ENCODE measurements at regions of chr9 and their contacts with region 1.

Region 1: DNA sequence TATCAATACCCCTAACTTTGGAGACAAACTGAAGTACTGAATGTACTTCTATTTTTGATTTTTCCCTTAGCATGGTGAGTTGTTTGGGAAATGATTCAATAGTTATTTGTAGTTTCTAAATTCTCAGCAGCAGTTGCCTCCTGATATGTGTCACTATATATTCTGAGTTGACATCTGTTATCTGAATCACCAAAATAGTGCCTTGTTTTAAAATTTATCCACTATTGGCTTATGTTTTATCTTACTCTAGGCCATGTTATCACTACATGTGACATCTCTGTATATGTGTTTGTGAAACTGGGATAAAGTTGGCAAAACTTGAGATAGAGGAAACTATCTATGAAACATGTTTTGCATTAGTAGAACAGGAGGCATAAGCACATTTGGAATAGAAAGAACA is 317.6 kb downstream of the TLE4 start:
- DNase-seq: no peak
- ATAC-seq: no peak
- H3K4me3 ChIP-seq: no peak overlapping the region
- H3K4me3 Mint-ChIP-seq: no peak overlapping the region
- H3K27ac ChIP-seq: no peak overlapping the region
- H3K27ac Mint-ChIP-seq: no peak overlapping the region
- H3K4me1 ChIP-seq: peaks cover 13 to 22% of the 10 kb centered on the region in 2 donors
- H3K4me1 Mint-ChIP-seq: peaks cover 21% of the 10 kb centered on the region
- H3K27me3 ChIP-seq: no peaks in the 10 kb centered on the region
- H3K27me3 Mint-ChIP-seq: no peaks in the 10 kb centered on the region
- CTCF ChIP-seq: no peak

Region 2: DNA sequence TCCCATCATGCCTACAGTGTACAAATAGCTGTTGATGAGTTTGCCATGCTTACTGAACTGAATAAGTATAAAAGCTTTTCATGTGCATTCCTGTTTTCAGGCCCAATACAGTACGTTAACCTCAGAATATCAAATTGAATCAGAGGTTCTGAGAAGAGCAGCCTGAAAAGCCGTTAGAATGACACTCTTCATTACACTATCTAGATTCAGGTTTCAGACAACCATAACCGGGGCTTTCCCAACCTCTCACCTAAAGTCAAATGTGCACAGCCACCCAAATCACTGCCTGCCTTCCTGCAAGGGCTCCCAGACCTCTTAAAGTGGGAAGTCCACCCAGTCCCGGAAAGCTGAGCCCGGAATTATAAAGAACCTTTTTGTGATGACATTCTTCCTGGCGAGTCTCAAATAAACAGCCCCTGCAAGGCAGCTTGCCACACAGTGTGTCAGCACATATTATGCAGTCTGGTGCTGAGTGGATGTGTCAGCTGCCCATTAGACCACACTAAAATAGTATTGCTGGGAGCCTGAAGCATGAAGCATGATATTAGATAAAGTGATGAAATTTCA is 71.8 kb before region 1 on chr9:
- CTCF ChIA-PET with region 1: interaction called, 3 read pairs
- POLR2A ChIA-PET with region 1: no interaction called
- intact Hi-C with region 1: loop called (anchors 2 kb)
- DNase-seq: peak; percentile 56
- ATAC-seq: peak; percentile 42
- H3K4me3 ChIP-seq: no peak overlapping the region
- H3K4me3 Mint-ChIP-seq: peak overlapping the region; percentile 20
- H3K27ac ChIP-seq: no peak overlapping the region
- H3K27ac Mint-ChIP-seq: no peak overlapping the region
- H3K4me1 ChIP-seq: peaks cover 39 to 47% of the 10 kb centered on the region in 2 donors
- H3K4me1 Mint-ChIP-seq: peaks cover 46% of the 10 kb centered on the region
- H3K27me3 ChIP-seq: peaks cover 0 to 19% (median 6%) of the 10 kb centered on the region in 4 experiments
- H3K27me3 Mint-ChIP-seq: peaks cover 9% of the 10 kb centered on the region
- CTCF ChIP-seq: no peak